Activated CD4-positive, alpha-beta T cell treated with anti-CD3 and anti-CD28 coated beads, Interleukin-2, amount 10 ng/mL, durations not matched to agents 24 days and 14 days (primary cell): ENCODE measurements at regions of chr19 and their contacts with region 1.

Region 1: DNA sequence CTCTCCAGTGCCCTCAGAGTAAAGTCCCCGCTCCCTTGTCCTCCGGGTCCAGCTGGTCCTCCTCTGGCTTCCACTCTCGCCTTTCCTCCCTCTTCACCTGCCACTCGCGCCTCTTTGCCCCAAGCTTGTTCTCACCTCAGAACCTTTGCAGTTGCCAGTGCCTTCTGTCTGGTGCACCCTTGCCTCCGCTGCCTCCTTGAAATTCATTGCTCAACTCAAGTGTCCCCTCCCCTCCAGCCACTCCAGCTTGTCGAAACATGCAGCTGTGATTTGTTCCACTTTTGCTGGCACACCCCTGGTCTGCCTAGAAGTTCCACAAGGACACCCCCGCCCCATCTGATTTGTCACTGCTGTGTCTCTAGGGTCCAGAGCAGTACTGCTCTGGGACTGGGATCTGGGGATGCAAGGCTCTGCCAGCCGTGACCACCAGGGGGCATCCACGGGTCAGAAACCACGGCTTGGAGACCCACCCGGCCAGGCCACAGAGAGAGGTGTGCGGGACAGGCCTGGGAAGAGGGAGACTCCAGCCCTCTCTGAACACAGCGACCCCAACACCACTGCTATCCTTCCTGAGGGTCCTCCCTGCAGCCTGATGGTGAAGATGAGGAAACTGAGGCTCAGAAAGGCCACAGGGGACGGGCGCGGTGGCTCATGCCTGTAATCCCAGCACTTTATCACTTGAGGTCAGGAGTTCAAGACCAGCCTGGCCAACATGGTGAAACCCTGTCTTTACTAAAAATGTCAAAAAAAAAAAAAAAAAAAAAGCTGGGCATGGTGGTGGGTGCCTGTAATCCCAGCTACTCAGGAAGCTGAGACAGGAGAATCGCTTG is 49.9 kb downstream of the AP1M1 start:
- DNase-seq: peak; percentile 95
- H3K4me3 Mint-ChIP-seq: no peak overlapping the region
- H3K27ac Mint-ChIP-seq: no peak overlapping the region
- H3K4me1 Mint-ChIP-seq: peaks cover 14% of the 10 kb centered on the region
- H3K27me3 Mint-ChIP-seq: peaks cover 7% of the 10 kb centered on the region

Region 2: DNA sequence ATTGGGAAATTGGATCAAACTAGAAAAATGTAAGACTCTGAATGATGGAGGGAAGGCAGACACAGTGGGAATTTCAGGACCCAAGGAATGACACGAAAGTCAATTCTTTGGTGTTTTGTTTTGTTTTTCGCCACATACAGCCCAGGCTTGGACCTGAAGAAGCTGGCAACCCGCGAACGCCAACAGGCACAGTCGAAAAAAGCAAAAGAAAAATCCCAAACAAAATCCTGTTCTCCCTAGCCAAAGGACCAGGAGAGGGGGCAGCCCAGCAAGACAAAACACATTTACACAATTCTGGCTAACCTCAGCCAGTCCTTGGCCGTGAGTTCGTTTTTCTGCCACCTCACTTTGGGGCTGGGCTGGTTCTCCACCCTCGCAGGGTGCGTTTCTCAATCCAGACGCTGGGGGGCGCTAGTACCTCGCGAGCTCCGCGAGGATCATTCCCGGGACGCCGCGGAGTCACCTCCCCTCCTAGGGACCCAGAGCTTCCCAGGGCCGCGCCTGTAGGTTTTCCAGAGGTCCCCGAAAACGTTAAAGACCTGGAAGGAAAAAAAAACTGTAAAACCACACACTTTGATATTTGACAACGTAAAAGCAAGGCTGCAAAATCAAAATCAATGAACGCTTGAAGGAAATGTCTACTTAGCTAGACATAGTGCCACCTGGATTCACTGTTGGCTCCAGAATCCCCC is 206.1 kb before region 1 on chr19:
- intact Hi-C with region 1: no loop called
- DNase-seq: peak; percentile 94
- H3K4me3 Mint-ChIP-seq: peak overlapping the region; percentile 62
- H3K27ac Mint-ChIP-seq: no peak overlapping the region
- H3K4me1 Mint-ChIP-seq: peaks cover 7% of the 10 kb centered on the region
- H3K27me3 Mint-ChIP-seq: peaks cover 13% of the 10 kb centered on the region

Region 3: GRCh38 chr19:16382775-16383543 is 135.4 kb after region 1 on chr19:
- intact Hi-C with region 1: loop called (anchors 1 kb)
- DNase-seq: peak; percentile 92
- H3K4me3 Mint-ChIP-seq: peak overlapping the region; percentile 53
- H3K27ac Mint-ChIP-seq: peak overlapping the region; percentile 15
- H3K4me1 Mint-ChIP-seq: peaks cover 38% of the 10 kb centered on the region
- H3K27me3 Mint-ChIP-seq: no peaks in the 10 kb centered on the region